Activated naive CD4-positive, alpha-beta T cell treated with anti-CD3 and anti-CD28 coated beads for 36 hours (primary cell): ENCODE measurements at regions of chr1 and their contacts with region 1.

Region 1: DNA sequence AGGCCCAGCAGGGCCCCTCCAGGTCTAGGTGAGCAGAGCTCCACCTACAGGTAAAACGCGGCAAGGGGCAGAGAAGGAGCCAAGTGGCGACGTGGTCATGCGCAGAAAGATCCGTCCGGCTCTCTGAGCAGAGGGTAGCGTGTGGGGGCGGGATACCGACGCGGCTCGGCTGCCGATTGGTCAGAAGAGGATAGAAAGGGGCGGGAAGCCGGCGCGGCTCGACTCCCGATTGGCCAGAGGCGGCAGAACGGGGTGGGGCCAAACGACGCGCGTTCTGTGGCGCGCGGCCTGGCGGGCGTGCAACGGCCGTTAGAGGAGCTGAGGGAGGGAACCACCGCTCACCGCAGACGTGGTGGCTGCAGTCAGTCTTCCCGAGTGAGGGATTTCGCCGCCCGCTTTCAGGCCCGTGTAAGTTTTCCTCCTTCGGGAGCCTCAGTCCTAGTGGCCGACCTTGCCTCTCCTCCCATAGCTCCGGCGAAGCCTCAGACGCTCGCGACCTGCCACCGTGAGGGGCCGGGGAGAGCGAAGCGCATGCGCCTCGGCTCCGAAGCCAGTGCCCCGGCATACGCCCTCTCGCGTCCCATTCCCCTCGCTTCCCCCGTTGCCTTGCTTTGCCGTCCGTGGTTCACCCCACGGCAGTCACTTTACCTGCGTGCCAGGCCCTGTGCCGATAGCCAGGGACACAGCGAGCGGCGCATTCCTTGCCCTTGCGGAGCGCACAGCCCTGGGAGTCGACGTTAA is at the start of gene CEP85:
- DNase-seq: peak; percentile 99
- H3K4me3 Mint-ChIP-seq: peak within 1 kb of the TSS; percentile 94
- H3K27ac Mint-ChIP-seq: peak within 1 kb of the TSS; percentile 90
- H3K4me1 Mint-ChIP-seq: peaks cover 31% of the 10 kb centered on the region
- H3K27me3 Mint-ChIP-seq: no peaks in the 10 kb centered on the region
- total RNA-seq, gene CEP85: 45.7 to 47.0 TPM

Region 2: DNA sequence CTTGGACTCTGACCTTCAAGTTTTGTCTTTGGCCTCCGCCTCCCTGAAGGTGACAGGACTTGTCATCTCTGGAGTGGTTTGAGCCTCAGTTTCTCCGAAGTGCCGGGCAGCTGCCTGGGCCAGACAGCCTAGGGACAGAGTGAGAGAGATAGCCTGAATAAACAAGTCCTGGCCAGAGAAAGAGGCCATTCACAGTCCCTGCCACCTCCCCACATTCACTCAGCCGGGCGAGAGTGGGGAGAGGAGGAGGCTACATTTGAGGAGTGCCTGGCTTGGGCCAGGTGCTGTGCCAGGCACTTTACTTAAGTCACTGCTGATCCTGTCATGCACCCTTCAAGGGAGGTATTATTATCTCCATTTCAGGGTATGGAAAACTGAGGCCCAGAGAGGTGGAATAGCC is 209.0 kb before region 1 on chr1:
- CTCF ChIA-PET with region 1: no interaction called
- intact Hi-C with region 1: no loop called
- DNase-seq: no peak
- H3K4me3 Mint-ChIP-seq: no peak overlapping the region
- H3K27ac Mint-ChIP-seq: no peak overlapping the region
- H3K4me1 Mint-ChIP-seq: peaks cover 2% of the 10 kb centered on the region
- H3K27me3 Mint-ChIP-seq: no peaks in the 10 kb centered on the region

Region 3: DNA sequence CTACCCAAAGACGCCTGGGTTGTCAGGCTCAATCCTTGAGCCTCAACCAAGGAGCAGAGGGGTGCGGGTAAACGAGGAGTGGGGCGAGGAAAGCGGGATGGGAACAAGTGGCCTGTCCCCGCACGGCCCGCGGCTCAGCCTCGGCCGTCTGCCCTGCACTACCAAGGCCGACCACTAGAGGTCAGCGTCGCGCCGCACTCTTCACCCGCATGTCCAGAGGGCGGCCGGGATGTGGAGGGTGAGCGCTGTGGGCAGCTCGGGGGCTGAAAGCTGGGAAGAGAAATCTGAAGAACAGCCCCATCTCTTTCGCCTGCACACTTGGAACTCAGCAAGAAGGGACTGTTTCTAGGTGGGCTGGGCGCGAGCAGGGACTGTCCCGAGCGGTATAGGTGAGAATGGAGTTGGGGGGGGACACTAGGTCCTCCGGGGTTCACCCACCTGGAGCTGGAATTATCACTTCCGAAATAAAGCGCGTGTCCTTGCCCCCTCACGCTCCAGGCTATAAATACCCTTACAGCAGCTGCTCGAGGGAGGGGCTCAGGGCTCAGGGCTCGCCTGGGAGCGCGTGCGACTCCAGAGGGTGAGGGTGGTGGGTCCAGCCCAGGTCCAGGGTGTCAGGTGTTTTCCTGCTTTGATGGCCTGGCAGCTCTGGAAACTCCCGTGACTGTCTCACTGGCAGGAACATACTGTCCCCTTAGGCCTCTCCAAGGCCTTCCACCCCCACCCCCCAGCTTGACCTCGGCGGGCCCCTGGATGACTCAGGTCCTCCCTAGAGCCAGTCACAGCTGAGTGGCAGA is 197.9 kb before region 1 on chr1:
- CTCF ChIA-PET with region 1: interaction called, 3 read pairs
- intact Hi-C with region 1: loop called (anchors 1 kb)
- DNase-seq: peak; percentile 78
- H3K4me3 Mint-ChIP-seq: peak overlapping the region; percentile 88
- H3K27ac Mint-ChIP-seq: no peak overlapping the region
- H3K4me1 Mint-ChIP-seq: peaks cover 13% of the 10 kb centered on the region
- H3K27me3 Mint-ChIP-seq: peaks cover 3% of the 10 kb centered on the region

Region 4: DNA sequence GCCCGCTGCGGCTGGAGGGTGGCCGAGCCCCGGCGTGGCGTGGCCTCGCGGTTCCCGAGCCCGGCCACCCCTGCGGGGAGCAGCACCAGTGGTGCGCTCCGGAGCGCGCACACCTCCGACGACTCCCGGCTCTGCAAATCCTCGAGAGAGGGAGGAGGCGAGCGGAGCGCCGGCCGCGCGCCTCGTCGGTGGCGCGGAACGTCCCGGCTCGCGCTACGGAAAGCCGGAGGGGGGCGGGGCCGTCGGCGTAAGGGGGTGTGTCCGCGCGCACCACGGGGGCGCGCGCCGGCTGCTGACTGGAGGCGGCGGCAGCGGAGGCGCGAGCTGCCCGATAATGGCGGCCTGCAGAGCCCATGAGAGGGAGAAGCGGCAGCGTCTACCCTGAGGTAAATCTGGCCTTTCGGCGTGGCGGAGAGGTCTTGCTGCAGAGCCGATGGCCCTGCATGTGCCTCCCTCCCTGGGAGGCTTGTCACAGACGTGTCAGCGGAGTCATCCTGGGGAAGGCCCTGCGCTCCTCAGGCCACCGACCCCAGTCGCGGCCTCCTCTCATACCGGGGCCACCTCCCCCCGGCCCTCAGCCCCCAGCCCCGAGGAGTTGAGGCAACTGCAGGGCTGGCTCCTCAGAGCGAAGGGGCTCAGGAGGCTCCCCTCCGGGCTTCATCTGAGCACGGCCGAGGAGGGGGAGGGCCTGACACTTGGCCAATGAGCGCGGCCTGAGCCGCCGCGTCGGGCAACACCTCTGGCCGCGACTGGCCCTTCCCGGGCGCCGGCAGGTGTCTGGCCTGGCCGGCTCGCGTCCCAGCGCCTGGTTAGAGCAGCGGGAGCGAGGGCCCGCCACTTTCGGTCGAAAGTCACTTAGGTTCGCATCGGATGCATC is 122.3 kb before region 1 on chr1 and contains the start of gene PDIK1L:
- CTCF ChIA-PET with region 1: interaction called, 4 read pairs
- intact Hi-C with region 1: loop called (anchors 1 kb)
- DNase-seq: peak; percentile 94
- H3K4me3 Mint-ChIP-seq: peak within 1 kb of the TSS; percentile 96
- H3K27ac Mint-ChIP-seq: peak within 1 kb of the TSS; percentile 90
- H3K4me1 Mint-ChIP-seq: peaks cover 28% of the 10 kb centered on the region
- H3K27me3 Mint-ChIP-seq: no peaks in the 10 kb centered on the region
- total RNA-seq, gene PDIK1L: 20.5 to 21.4 TPM

Region 5: DNA sequence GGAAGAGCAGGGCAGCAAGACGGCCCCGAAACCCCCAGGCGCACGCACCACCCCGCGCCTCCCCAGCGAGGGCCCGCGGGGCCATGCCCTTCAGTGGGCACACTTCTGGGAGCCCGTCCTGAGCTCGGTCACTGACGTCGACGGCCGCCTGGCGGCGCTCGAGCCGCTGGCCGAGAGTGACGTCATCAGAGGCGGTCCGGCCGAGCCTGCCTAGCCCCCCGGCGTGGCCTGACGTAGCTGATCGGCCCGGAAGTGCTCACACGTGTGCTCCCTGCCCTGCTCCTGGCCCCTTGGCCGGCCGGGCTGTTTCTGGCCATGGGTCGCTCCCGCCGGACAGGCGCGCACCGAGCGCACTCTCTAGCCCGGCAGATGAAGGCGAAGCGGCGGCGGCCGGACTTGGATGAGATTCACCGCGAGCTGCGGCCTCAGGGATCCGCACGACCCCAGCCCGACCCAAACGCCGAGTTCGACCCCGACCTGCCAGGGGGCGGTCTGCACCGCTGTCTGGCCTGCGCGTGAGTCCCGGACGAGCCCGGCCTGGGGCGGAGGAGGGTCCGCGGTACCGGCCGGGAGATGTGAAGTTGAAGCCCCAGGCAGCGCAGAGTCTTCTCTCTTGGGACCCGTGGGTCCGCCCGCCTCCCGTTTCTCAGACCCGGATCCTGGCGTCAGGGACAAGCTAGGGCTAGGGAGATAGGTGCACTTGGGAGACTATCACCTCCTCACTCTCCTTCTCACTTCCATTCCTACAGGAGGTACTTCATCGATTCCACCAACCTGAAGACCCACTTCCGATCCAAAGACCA is 64.2 kb before region 1 on chr1 and contains the start of gene ZNF593:
- CTCF ChIA-PET with region 1: interaction called, 31 read pairs
- intact Hi-C with region 1: loop called (anchors 1 kb)
- DNase-seq: peak; percentile 89
- H3K4me3 Mint-ChIP-seq: peak within 1 kb of the TSS; percentile 78
- H3K27ac Mint-ChIP-seq: peak within 1 kb of the TSS; percentile 60
- H3K4me1 Mint-ChIP-seq: peaks cover 8% of the 10 kb centered on the region
- H3K27me3 Mint-ChIP-seq: no peaks in the 10 kb centered on the region
- total RNA-seq, gene ZNF593: 24.0 to 26.8 TPM

Region 6: GRCh38 chr1:26190373-26190987 is 43.6 kb before region 1 on chr1 and contains the start of gene CATSPER4:
- CTCF ChIA-PET with region 1: interaction called, 10 read pairs
- intact Hi-C with region 1: loop called (anchors 1 kb)
- DNase-seq: no peak
- H3K4me3 Mint-ChIP-seq: no peak within 1 kb of the TSS
- H3K27ac Mint-ChIP-seq: no peak within 1 kb of the TSS
- H3K4me1 Mint-ChIP-seq: peaks cover 13% of the 10 kb centered on the region
- H3K27me3 Mint-ChIP-seq: no peaks in the 10 kb centered on the region
- total RNA-seq, gene CATSPER4: not detected

Region 7: DNA sequence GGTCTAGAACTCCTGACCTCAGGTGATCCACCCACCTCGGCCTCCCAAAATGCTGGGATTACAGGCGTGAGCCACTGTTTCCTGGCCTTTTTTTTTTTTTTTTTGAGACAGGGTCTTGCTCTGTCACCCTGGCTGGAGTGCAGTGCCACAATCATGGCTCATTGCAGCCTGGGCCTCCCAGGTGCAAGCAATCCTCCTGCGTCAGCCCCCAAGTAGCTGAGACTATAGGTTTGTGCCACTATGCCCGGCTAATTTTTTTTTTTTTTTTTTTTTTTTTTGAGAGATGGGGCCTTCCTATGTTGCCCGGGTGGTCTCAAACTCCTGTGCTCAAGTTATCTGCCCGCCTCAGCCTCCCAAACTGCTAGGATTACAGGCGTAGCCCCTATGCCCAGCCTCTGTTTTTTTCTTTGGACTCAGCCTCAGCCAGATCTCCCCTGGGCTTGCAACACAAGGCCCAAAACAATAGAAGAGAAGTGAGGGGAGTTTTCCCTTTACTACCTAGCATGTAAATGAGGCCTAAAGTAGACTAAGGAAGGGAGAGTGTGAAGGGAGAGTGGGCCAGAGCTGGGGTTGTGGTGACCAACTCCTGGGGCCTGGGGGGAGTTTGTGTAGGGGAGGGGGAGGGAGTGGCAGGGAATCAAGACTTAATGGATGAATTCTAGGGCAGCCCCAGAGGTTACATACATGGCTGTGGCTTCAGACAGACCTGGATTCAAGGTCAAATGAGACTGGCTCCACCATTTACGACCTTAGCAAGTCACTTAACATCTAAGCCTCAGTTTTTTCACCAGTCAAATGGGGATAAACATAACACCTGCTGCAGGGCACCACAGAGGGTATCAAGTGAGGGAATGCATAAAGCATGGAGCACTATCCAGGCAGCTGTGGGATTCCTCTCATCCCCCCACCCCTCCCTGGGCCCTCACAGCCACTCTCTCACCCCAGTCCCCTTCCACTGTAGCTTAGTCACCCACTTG is 82.1 kb after region 1 on chr1:
- CTCF ChIA-PET with region 1: interaction called, 7 read pairs
- intact Hi-C with region 1: loop called (anchors 1 kb)
- DNase-seq: no peak
- H3K4me3 Mint-ChIP-seq: peak overlapping the region; percentile 38
- H3K27ac Mint-ChIP-seq: peak overlapping the region; percentile 81
- H3K4me1 Mint-ChIP-seq: peaks cover 60% of the 10 kb centered on the region
- H3K27me3 Mint-ChIP-seq: no peaks in the 10 kb centered on the region